GM12878 (cell line): ENCODE measurements at regions of chr17 and their contacts with region 1.

Region 1: GRCh38 chr17:32319548-32319905 is 22.4 kb downstream of the C17orf75 start:
- DNase-seq: peak; percentile 55
- ATAC-seq: peak; percentile 89
- H3K4me3 ChIP-seq: no peak overlapping the region
- H3K27ac ChIP-seq: no peak overlapping the region
- H3K4me1 ChIP-seq: peaks cover 7% of the 10 kb centered on the region
- H3K27me3 ChIP-seq: peaks cover 0 to 2% of the 10 kb centered on the region in 2 experiments; a peak in 3 of 4 replicates
- CTCF ChIP-seq: peak; percentile 96 to 99 (median 97); a peak in 5 of 6 replicates
- EP300 ChIP-seq: 0 out of 4 replicates have a peak, but pooled peaks of 1 of the 2 experiments have one; percentile 20
- POLR2A ChIP-seq: no peak
- RAD21 ChIP-seq: peak; percentile 92

Region 2: DNA sequence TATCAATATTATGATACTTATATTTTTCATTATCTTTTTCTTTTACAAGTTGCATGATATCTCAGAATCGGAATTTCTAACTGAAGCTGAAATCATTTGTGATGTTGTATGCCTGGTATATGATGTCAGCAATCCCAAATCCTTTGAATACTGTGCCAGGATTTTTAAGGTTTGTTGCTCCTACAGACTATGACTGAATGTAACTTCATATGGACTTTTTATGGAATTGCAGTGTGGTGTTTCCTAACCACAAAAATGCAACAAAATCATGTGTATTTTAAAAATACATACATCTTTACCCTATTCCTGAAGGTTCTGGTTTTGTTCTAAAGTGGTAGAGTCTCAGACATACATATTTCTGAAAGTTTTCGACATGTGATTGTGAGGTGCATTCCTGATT is 112.7 kb before region 1 on chr17:
- CTCF ChIA-PET with region 1: interaction called, 18 read pairs
- POLR2A ChIA-PET with region 1: no interaction called
- RAD21 ChIA-PET with region 1: interaction called, 12 read pairs
- SMC1A ChIA-PET with region 1: interaction called, 7 read pairs
- in situ Hi-C with region 1: no loop called
- intact Hi-C with region 1: loop called (anchors 5 kb)
- DNase-seq: no peak
- ATAC-seq: no peak
- H3K4me3 ChIP-seq: no peak overlapping the region
- H3K27ac ChIP-seq: no peak overlapping the region
- H3K4me1 ChIP-seq: no peaks in the 10 kb centered on the region
- H3K27me3 ChIP-seq: no peaks in the 10 kb centered on the region
- CTCF ChIP-seq: no peak
- EP300 ChIP-seq: no peak
- POLR2A ChIP-seq: no peak
- RAD21 ChIP-seq: no peak

Region 3: GRCh38 chr17:32253117-32253611 is 66.4 kb before region 1 on chr17:
- CTCF ChIA-PET with region 1: interaction called, 132 read pairs
- POLR2A ChIA-PET with region 1: no interaction called
- RAD21 ChIA-PET with region 1: interaction called, 53 read pairs
- SMC1A ChIA-PET with region 1: interaction called, 22 read pairs
- in situ Hi-C with region 1: no loop called
- intact Hi-C with region 1: loop called (anchors 1 kb)
- DNase-seq: no peak
- ATAC-seq: peak; percentile 99
- H3K4me3 ChIP-seq: no peak overlapping the region
- H3K27ac ChIP-seq: no peak overlapping the region
- H3K4me1 ChIP-seq: no peaks in the 10 kb centered on the region; the same call in 1 of the 2 replicates
- H3K27me3 ChIP-seq: peaks cover 0 to 2% of the 10 kb centered on the region in 2 experiments; a peak in 1 of 4 replicates
- CTCF ChIP-seq: peak; percentile 98 to 99 (median 99); a peak in 5 of 6 replicates
- EP300 ChIP-seq: no peak
- POLR2A ChIP-seq: no peak
- RAD21 ChIP-seq: peak; percentile 93

Region 4: GRCh38 chr17:32258383-32259140 is 61.0 kb before region 1 on chr17:
- CTCF ChIA-PET with region 1: interaction called, 132 read pairs
- POLR2A ChIA-PET with region 1: no interaction called
- RAD21 ChIA-PET with region 1: interaction called, 53 read pairs
- SMC1A ChIA-PET with region 1: interaction called, 22 read pairs
- in situ Hi-C with region 1: no loop called
- intact Hi-C with region 1: loop called (anchors 1 kb)
- DNase-seq: no peak
- ATAC-seq: no peak
- H3K4me3 ChIP-seq: no peak overlapping the region
- H3K27ac ChIP-seq: no peak overlapping the region
- H3K4me1 ChIP-seq: no peaks in the 10 kb centered on the region; the same call in 1 of the 2 replicates
- H3K27me3 ChIP-seq: peaks cover 2 to 3% of the 10 kb centered on the region in 2 experiments; a peak in 2 of 4 replicates
- CTCF ChIP-seq: no peak
- EP300 ChIP-seq: no peak
- POLR2A ChIP-seq: no peak
- RAD21 ChIP-seq: no peak

Region 5: DNA sequence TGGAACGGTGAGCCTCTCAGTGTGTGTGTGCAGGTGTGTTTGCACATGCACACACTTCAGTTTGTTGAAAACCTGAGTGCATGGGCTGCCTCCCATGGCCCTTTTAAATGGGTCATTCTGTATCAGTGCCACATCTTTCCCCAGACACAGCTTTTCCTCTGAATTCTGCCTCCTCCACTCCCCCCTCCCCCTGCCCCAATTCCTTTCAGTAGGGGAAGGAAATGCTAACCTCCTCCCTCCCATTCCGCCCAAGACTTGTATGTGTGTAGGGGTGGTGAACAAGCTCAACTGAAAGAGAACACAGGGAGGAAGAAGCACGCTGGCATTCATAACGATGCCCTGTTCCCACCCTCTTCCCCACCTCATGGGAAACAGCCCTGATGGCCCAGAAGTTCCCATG is 11.9 kb before region 1 on chr17:
- CTCF ChIA-PET with region 1: interaction called, 10 read pairs
- POLR2A ChIA-PET with region 1: interaction called, 3 read pairs
- RAD21 ChIA-PET with region 1: interaction called, 3 read pairs
- SMC1A ChIA-PET with region 1: interaction called, 4 read pairs
- in situ Hi-C with region 1: no loop called
- intact Hi-C with region 1: no loop called
- DNase-seq: no peak
- ATAC-seq: no peak
- H3K4me3 ChIP-seq: no peak overlapping the region
- H3K27ac ChIP-seq: no peak overlapping the region
- H3K4me1 ChIP-seq: no peaks in the 10 kb centered on the region
- H3K27me3 ChIP-seq: peaks cover 0 to 9% of the 10 kb centered on the region in 2 experiments; a peak in 2 of 4 replicates
- CTCF ChIP-seq: no peak
- EP300 ChIP-seq: no peak
- POLR2A ChIP-seq: no peak
- RAD21 ChIP-seq: no peak

Region 6: DNA sequence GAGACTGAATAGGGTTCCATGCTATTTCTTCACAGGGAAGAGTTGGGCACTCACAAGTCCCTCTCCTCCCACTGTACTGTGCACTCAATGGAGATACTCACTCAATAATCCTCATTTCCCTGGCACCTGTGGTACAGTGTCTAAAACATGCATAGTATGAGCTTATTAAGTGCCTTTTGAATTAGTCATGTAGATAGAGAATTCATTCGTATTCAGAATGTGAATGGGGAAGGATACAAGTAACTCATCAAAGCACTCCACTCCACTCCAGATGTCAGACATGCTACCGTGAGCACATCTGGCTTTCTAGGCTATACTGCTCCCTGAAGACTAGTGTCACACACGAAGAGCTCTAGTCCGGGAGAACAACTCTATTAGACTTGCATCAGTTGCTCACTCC is 16.2 kb after region 1 on chr17:
- CTCF ChIA-PET with region 1: interaction called, 54 read pairs
- POLR2A ChIA-PET with region 1: interaction called, 3 read pairs
- RAD21 ChIA-PET with region 1: interaction called, 3 read pairs
- SMC1A ChIA-PET with region 1: interaction called, 6 read pairs
- in situ Hi-C with region 1: no loop called
- intact Hi-C with region 1: no loop called
- DNase-seq: no peak
- ATAC-seq: no peak
- H3K4me3 ChIP-seq: no peak overlapping the region
- H3K27ac ChIP-seq: no peak overlapping the region
- H3K4me1 ChIP-seq: no peaks in the 10 kb centered on the region
- H3K27me3 ChIP-seq: no peaks in the 10 kb centered on the region
- CTCF ChIP-seq: no peak
- EP300 ChIP-seq: no peak
- POLR2A ChIP-seq: no peak
- RAD21 ChIP-seq: no peak